ENCODE measurements at regions of chr4 and their contacts with region 1.

Region 1: GRCh38 chr4:77618383-77619122 is 12.9 kb downstream of the CXCL13 start:
- DNase-seq: peak; percentile 37 to 58 (median 45)
- H3K4me3 ChIP-seq: no peak overlapping the region
- H3K4me3 Mint-ChIP-seq: peak overlapping the region in 1 of 8 donors; percentile 45
- H3K27ac ChIP-seq: no peak overlapping the region
- H3K27ac Mint-ChIP-seq: no peak overlapping the region
- H3K4me1 ChIP-seq: peaks cover 3% of the 10 kb centered on the region
- H3K4me1 Mint-ChIP-seq: peaks cover 5 to 9% (median 6%) of the 10 kb centered on the region in 4 donors
- H3K27me3 ChIP-seq: no peaks in the 10 kb centered on the region
- H3K27me3 Mint-ChIP-seq: peaks cover 2 to 16% of the 10 kb centered on the region in 2 donors

Region 2: DNA sequence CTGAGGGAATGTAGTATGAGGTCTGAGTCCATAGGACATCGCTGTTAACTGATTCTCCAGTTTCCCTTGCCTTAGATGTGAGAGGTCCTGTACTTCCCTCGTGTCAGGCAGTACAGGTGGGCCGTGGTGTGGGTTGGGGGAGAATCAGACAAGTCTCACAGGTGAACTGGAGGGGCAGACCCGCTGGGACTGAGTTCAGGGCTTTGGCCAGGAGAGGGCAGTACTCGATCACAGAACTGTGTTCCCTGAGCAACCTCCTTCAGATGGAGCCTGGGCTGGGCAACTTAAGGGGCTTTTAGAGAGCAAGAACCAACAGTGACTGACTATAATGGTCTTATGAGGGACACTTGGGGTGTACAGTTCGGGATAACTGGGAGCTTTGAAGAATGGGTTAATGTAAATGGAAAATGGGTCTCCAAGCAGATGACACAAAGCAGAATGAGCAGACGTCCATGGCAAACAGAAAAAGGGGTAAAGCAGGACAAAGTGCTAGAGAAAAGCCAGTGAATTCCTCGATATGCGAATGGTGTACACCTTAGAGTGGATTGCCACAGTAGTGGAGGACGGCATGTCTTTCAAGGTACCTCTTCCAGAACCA is 378.0 kb before region 1 on chr4:
- CTCF ChIA-PET with region 1: no interaction called
- POLR2A ChIA-PET with region 1: no interaction called
- intact Hi-C with region 1: loop called (anchors 1 kb)
- DNase-seq: peak in 4 of 5 donors; percentile 15 to 44 (median 21)
- H3K4me3 ChIP-seq: no peak overlapping the region
- H3K4me3 Mint-ChIP-seq: peak overlapping the region in 1 of 8 donors; percentile 3
- H3K27ac ChIP-seq: no peak overlapping the region
- H3K27ac Mint-ChIP-seq: peak overlapping the region in 1 of 7 donors; percentile 51
- H3K4me1 ChIP-seq: no peaks in the 10 kb centered on the region
- H3K4me1 Mint-ChIP-seq: no peaks in the 10 kb centered on the region
- H3K27me3 ChIP-seq: no peaks in the 10 kb centered on the region
- H3K27me3 Mint-ChIP-seq: peaks cover 9 to 13% of the 10 kb centered on the region in 2 donors

Region 3: GRCh38 chr4:77629885-77630284 is 11.3 kb after region 1 on chr4:
- CTCF ChIA-PET with region 1: interaction called, 10 read pairs
- POLR2A ChIA-PET with region 1: no interaction called
- intact Hi-C with region 1: no loop called
- DNase-seq: no peak
- H3K4me3 ChIP-seq: no peak overlapping the region
- H3K4me3 Mint-ChIP-seq: peak overlapping the region in 3 of 8 donors; percentile 0 to 47 (median 45)
- H3K27ac ChIP-seq: no peak overlapping the region
- H3K27ac Mint-ChIP-seq: peak overlapping the region in 2 of 7 donors; percentile 4 to 6
- H3K4me1 ChIP-seq: no peaks in the 10 kb centered on the region
- H3K4me1 Mint-ChIP-seq: peaks cover 5 to 15% (median 11%) of the 10 kb centered on the region in 4 donors
- H3K27me3 ChIP-seq: no peaks in the 10 kb centered on the region
- H3K27me3 Mint-ChIP-seq: no peaks in the 10 kb centered on the region

Region 4: GRCh38 chr4:77652237-77652897 is 33.8 kb after region 1 on chr4:
- CTCF ChIA-PET with region 1: no interaction called
- POLR2A ChIA-PET with region 1: no interaction called
- intact Hi-C with region 1: no loop called
- DNase-seq: no peak
- H3K4me3 ChIP-seq: no peak overlapping the region
- H3K4me3 Mint-ChIP-seq: no peak overlapping the region
- H3K27ac ChIP-seq: no peak overlapping the region
- H3K27ac Mint-ChIP-seq: no peak overlapping the region
- H3K4me1 ChIP-seq: no peaks in the 10 kb centered on the region
- H3K4me1 Mint-ChIP-seq: no peaks in the 10 kb centered on the region
- H3K27me3 ChIP-seq: no peaks in the 10 kb centered on the region
- H3K27me3 Mint-ChIP-seq: peaks cover 0 to 10% of the 10 kb centered on the region in 2 donors

Region 5: DNA sequence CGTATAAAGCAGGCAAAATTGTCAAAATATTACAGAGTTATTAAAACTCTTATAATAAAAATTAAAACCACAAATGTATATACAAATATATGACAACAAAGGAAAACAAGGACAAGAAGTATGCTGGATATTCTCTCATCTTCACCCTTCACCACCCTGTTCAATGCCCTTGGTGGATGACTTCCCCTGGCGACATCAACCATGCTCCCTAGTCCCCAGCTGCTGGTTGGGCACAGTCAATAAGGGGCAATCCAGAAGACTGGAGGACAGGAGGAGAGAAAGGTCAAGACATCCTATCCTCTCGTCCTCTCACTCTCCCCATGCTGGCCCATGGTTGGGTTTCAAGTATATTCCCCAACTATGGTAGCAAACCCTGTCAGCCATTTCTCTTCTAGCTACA is 58.3 kb after region 1 on chr4:
- CTCF ChIA-PET with region 1: no interaction called
- POLR2A ChIA-PET with region 1: no interaction called
- intact Hi-C with region 1: no loop called
- DNase-seq: no peak
- H3K4me3 ChIP-seq: no peak overlapping the region
- H3K4me3 Mint-ChIP-seq: no peak overlapping the region
- H3K27ac ChIP-seq: no peak overlapping the region
- H3K27ac Mint-ChIP-seq: no peak overlapping the region
- H3K4me1 ChIP-seq: no peaks in the 10 kb centered on the region
- H3K4me1 Mint-ChIP-seq: no peaks in the 10 kb centered on the region
- H3K27me3 ChIP-seq: no peaks in the 10 kb centered on the region
- H3K27me3 Mint-ChIP-seq: peaks cover 0 to 5% of the 10 kb centered on the region in 2 donors